ENCODE measurements at regions of chr4 and their contacts with region 1.

Region 1: DNA sequence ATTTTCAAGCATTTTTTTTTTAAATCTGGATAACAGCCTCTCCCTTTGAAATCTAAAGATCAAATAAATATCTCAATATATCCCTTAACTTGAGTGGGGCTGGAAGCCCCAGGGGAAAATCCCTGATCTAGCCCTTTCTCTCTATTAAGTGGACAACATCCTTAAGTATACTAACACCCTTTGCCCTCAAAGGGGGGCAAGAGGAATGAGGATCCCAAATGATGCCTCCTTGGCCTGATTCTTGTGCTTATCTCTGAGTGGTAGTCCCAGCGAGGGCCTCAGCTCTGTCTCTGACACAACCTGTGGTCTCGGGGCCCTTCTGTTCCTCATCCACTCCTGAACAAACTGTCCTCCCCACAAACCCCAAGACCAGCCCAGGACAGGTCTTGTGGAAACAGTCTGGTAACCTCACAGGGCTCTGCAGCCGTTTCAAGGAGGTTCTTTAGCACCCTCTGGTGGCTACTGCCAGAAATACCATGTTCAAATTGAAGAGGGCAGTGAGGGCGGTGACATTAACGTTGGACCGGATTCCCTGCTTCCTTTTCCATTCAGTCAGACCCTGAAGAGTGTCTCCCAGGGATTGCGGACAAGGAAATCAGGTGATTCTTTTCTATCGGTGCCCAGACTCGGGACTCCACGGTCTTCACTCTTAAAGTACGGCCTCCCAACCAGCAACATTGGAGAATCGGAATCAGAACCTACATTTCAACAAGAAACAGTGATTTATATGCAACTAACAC is 12.9 kb downstream of the CXCL13 start:
- DNase-seq: peak; percentile 79
- ATAC-seq: peak; percentile 93
- H3K4me3 Mint-ChIP-seq: no peak overlapping the region
- H3K27ac Mint-ChIP-seq: no peak overlapping the region
- H3K4me1 Mint-ChIP-seq: peaks cover 9% of the 10 kb centered on the region
- H3K27me3 Mint-ChIP-seq: peaks cover 17% of the 10 kb centered on the region

Region 2: DNA sequence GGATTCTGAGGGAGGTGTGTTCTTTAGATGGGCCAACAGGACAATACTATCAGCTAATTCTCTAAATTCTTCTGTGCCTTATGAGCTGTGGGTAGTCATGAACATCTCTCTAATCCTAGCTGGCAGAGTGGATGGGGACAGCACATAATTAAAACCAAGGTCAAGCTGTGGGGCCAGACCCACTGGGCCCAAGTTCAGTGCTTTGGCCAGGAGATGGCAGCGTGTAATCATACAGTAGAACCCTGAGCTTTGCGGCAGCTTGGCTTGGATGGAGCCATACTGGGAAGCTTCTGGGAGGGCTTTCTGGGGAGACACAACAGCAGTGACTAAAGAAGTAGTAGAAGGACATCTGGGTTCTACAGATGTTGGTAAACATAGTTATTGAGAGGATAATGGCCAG is 153.3 kb before region 1 on chr4:
- CTCF ChIA-PET with region 1: interaction called, 35 read pairs
- POLR2A ChIA-PET with region 1: no interaction called
- DNase-seq: no peak
- ATAC-seq: no peak
- H3K4me3 Mint-ChIP-seq: no peak overlapping the region
- H3K27ac Mint-ChIP-seq: no peak overlapping the region
- H3K4me1 Mint-ChIP-seq: no peaks in the 10 kb centered on the region
- H3K27me3 Mint-ChIP-seq: peaks cover 11% of the 10 kb centered on the region

Region 3: DNA sequence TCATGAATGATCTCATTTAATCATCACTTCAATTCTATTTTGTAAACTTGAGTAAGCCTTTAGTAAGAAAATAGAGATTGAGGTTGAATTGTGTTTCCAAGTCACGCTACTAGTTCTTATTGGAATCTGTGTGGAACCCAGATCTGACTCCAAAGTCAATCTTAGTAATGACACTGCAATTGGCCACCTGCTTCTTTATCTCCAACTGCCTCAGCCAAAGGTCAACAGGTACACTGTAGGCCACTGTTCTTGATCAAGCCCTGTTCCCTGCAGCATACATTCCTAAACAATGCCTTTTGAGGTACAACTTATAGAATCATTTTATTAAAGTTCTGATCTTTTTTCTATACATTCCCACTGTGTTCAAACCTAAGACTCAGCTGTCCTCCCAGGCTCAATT is 58.4 kb before region 1 on chr4:
- CTCF ChIA-PET with region 1: no interaction called
- POLR2A ChIA-PET with region 1: no interaction called
- DNase-seq: no peak
- ATAC-seq: no peak
- H3K4me3 Mint-ChIP-seq: no peak overlapping the region
- H3K27ac Mint-ChIP-seq: no peak overlapping the region
- H3K4me1 Mint-ChIP-seq: no peaks in the 10 kb centered on the region
- H3K27me3 Mint-ChIP-seq: no peaks in the 10 kb centered on the region

Region 4: DNA sequence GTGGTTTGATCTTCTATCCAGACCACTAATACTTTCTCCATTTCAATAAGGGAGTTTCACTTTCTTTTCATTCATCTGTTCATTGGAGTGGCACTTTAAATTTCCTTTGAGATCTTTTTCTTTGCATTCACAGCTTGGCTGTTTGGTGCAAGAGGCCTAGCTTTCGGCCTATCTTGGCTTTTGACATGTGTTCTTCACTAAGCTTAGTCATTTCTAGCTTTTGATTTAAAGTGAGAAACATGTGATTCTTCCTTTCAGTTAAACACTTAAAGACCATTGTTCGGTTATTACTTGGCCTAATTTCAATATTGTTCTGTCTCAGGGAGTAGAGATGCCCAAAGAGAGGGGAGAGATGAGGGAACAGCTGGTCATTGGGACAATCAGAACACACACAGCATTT is 11.3 kb after region 1 on chr4:
- CTCF ChIA-PET with region 1: interaction called, 49 read pairs
- POLR2A ChIA-PET with region 1: no interaction called
- DNase-seq: no peak
- ATAC-seq: no peak
- H3K4me3 Mint-ChIP-seq: no peak overlapping the region
- H3K27ac Mint-ChIP-seq: no peak overlapping the region
- H3K4me1 Mint-ChIP-seq: peaks cover 8% of the 10 kb centered on the region
- H3K27me3 Mint-ChIP-seq: no peaks in the 10 kb centered on the region

Measured in activated CD8-positive, alpha-beta T cell treated with anti-CD3 and anti-CD28 coated beads, Interleukin-2, amount 10 ng/mL, durations not matched to agents 7 days and 5 days (primary cell).